B cell (primary cell): ENCODE measurements at regions of chr3 and their contacts with region 1.

Region 1: GRCh38 chr3:136861890-136862616 is at the start of gene NCK1:
- DNase-seq: peak; percentile 98
- ATAC-seq: peak; percentile 92
- H3K4me3 ChIP-seq: peak within 1 kb of the TSS; percentile 78 to 84 (median 83)
- H3K4me3 Mint-ChIP-seq: peak within 1 kb of the TSS; percentile 98
- H3K27ac ChIP-seq: peak within 1 kb of the TSS; percentile 85 to 90
- H3K27ac Mint-ChIP-seq: peak within 1 kb of the TSS; percentile 99
- H3K4me1 ChIP-seq: peaks cover 18 to 22% of the 10 kb centered on the region in 2 donors
- H3K4me1 Mint-ChIP-seq: peaks cover 41% of the 10 kb centered on the region
- H3K27me3 ChIP-seq: no peaks in the 10 kb centered on the region
- H3K27me3 Mint-ChIP-seq: no peaks in the 10 kb centered on the region
- CTCF ChIP-seq: peak; percentile 52
- total RNA-seq, gene NCK1: 32.4 and 39.2 TPM in 2 replicates

Region 2: GRCh38 chr3:135965506-135966270 is 896.4 kb before region 1 on chr3 and contains the start of gene PPP2R3A:
- CTCF ChIA-PET with region 1: no interaction called
- POLR2A ChIA-PET with region 1: no interaction called
- intact Hi-C with region 1: loop called (anchors 5 kb)
- DNase-seq: peak; percentile 73
- ATAC-seq: peak; percentile 88
- H3K4me3 ChIP-seq: peak within 1 kb of the TSS in 4 of 5 experiments; percentile 42 to 77 (median 60)
- H3K4me3 Mint-ChIP-seq: peak within 1 kb of the TSS; percentile 87
- H3K27ac ChIP-seq: no peak within 1 kb of the TSS
- H3K27ac Mint-ChIP-seq: no peak within 1 kb of the TSS
- H3K4me1 ChIP-seq: peaks cover 7 to 14% of the 10 kb centered on the region in 2 donors
- H3K4me1 Mint-ChIP-seq: peaks cover 11% of the 10 kb centered on the region
- H3K27me3 ChIP-seq: peaks cover 0 to 20% (median 18%) of the 10 kb centered on the region in 4 experiments
- H3K27me3 Mint-ChIP-seq: peaks cover 46% of the 10 kb centered on the region
- CTCF ChIP-seq: no peak
- total RNA-seq, gene PPP2R3A: 0.22 and 0.39 TPM in 2 replicates

Region 3: GRCh38 chr3:136196401-136197158 is 665.5 kb before region 1 on chr3:
- CTCF ChIA-PET with region 1: no interaction called
- POLR2A ChIA-PET with region 1: interaction called, 24 read pairs
- intact Hi-C with region 1: no loop called
- DNase-seq: peak; percentile 99
- ATAC-seq: peak; percentile 68
- H3K4me3 ChIP-seq: peak overlapping the region; percentile 65 to 95 (median 86)
- H3K4me3 Mint-ChIP-seq: peak overlapping the region; percentile 97
- H3K27ac ChIP-seq: peak overlapping the region; percentile 91 to 99
- H3K27ac Mint-ChIP-seq: peak overlapping the region; percentile 100
- H3K4me1 ChIP-seq: peaks cover 34 to 36% of the 10 kb centered on the region in 2 donors
- H3K4me1 Mint-ChIP-seq: peaks cover 36% of the 10 kb centered on the region
- H3K27me3 ChIP-seq: no peaks in the 10 kb centered on the region
- H3K27me3 Mint-ChIP-seq: no peaks in the 10 kb centered on the region
- CTCF ChIP-seq: no peak

Region 4: GRCh38 chr3:136390574-136390973 is 471.5 kb before region 1 on chr3:
- CTCF ChIA-PET with region 1: interaction called, 9 read pairs
- POLR2A ChIA-PET with region 1: interaction called, 6 read pairs
- intact Hi-C with region 1: loop called (anchors 1 kb)
- DNase-seq: no peak
- ATAC-seq: no peak
- H3K4me3 ChIP-seq: no peak overlapping the region
- H3K4me3 Mint-ChIP-seq: no peak overlapping the region
- H3K27ac ChIP-seq: no peak overlapping the region
- H3K27ac Mint-ChIP-seq: no peak overlapping the region
- H3K4me1 ChIP-seq: no peaks in the 10 kb centered on the region
- H3K4me1 Mint-ChIP-seq: peaks cover 5% of the 10 kb centered on the region
- H3K27me3 ChIP-seq: no peaks in the 10 kb centered on the region
- H3K27me3 Mint-ChIP-seq: no peaks in the 10 kb centered on the region
- CTCF ChIP-seq: no peak

Region 5: GRCh38 chr3:136547293-136547692 is 314.8 kb before region 1 on chr3:
- CTCF ChIA-PET with region 1: no interaction called
- POLR2A ChIA-PET with region 1: no interaction called
- intact Hi-C with region 1: no loop called
- DNase-seq: no peak
- ATAC-seq: no peak
- H3K4me3 ChIP-seq: no peak overlapping the region
- H3K4me3 Mint-ChIP-seq: no peak overlapping the region
- H3K27ac ChIP-seq: peak overlapping the region in 1 of 2 donors; percentile 7
- H3K27ac Mint-ChIP-seq: no peak overlapping the region
- H3K4me1 ChIP-seq: peaks cover 3 to 8% of the 10 kb centered on the region in 2 donors
- H3K4me1 Mint-ChIP-seq: peaks cover 17% of the 10 kb centered on the region
- H3K27me3 ChIP-seq: no peaks in the 10 kb centered on the region
- H3K27me3 Mint-ChIP-seq: no peaks in the 10 kb centered on the region
- CTCF ChIP-seq: no peak

Region 6: GRCh38 chr3:136559896-136560295 is 302.2 kb before region 1 on chr3:
- CTCF ChIA-PET with region 1: no interaction called
- POLR2A ChIA-PET with region 1: no interaction called
- intact Hi-C with region 1: no loop called
- DNase-seq: no peak
- ATAC-seq: no peak
- H3K4me3 ChIP-seq: no peak overlapping the region
- H3K4me3 Mint-ChIP-seq: no peak overlapping the region
- H3K27ac ChIP-seq: no peak overlapping the region
- H3K27ac Mint-ChIP-seq: no peak overlapping the region
- H3K4me1 ChIP-seq: no peaks in the 10 kb centered on the region
- H3K4me1 Mint-ChIP-seq: peaks cover 2% of the 10 kb centered on the region
- H3K27me3 ChIP-seq: no peaks in the 10 kb centered on the region
- H3K27me3 Mint-ChIP-seq: no peaks in the 10 kb centered on the region
- CTCF ChIP-seq: no peak

Region 7: DNA sequence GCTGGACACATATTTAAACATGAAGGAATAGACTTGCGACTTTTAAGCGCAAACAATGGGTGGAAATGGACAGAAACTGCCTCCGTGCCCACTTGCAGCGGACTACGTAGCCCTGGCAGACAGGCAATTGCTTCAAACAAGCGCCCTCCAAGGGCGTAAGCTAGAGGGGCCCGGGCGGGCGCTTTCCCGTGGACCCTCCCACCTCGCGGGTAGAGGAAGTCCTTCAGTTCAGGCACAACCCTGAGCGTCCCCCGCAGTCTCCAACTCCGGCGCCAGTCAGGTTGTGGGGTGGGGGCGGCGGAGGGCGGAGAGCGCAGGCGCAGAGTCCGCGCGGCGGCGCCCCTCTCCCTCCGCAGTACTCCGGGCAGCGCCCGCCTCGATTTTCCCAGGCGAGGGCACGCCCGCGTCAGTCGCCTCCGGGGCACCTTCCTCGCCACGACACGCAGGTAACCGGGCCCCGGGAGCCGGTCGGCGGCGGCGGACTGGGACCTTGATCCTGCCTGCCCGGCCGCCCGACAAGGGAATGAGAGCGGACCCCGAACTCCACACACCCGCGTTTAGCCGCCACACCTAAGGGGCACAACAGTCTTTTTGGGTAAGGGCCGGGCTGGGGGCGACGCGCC is 43.2 kb before region 1 on chr3 and contains the start of gene SLC35G2:
- CTCF ChIA-PET with region 1: no interaction called
- POLR2A ChIA-PET with region 1: interaction called, 3 read pairs
- intact Hi-C with region 1: loop called (anchors 1 kb)
- DNase-seq: peak; percentile 38
- ATAC-seq: peak; percentile 68
- H3K4me3 ChIP-seq: peak within 1 kb of the TSS; percentile 43 to 66 (median 58)
- H3K4me3 Mint-ChIP-seq: peak within 1 kb of the TSS; percentile 95
- H3K27ac ChIP-seq: no peak within 1 kb of the TSS
- H3K27ac Mint-ChIP-seq: peak within 1 kb of the TSS; percentile 89
- H3K4me1 ChIP-seq: peaks cover 21 to 22% of the 10 kb centered on the region in 2 donors
- H3K4me1 Mint-ChIP-seq: peaks cover 23% of the 10 kb centered on the region
- H3K27me3 ChIP-seq: peaks cover 0 to 40% (median 31%) of the 10 kb centered on the region in 4 experiments
- H3K27me3 Mint-ChIP-seq: peaks cover 30% of the 10 kb centered on the region
- CTCF ChIP-seq: no peak
- total RNA-seq, gene SLC35G2: 6.3 and 9.4 TPM in 2 replicates

Region 8: GRCh38 chr3:137013955-137014688 is 152.1 kb after region 1 on chr3:
- CTCF ChIA-PET with region 1: interaction called, 27 read pairs
- POLR2A ChIA-PET with region 1: no interaction called
- intact Hi-C with region 1: loop called (anchors 2 kb)
- DNase-seq: peak; percentile 85
- ATAC-seq: peak; percentile 90
- H3K4me3 ChIP-seq: peak overlapping the region in 4 of 5 experiments; percentile 7 to 55 (median 38)
- H3K4me3 Mint-ChIP-seq: peak overlapping the region; percentile 71
- H3K27ac ChIP-seq: no peak overlapping the region
- H3K27ac Mint-ChIP-seq: no peak overlapping the region
- H3K4me1 ChIP-seq: peaks cover 5 to 9% of the 10 kb centered on the region in 2 donors
- H3K4me1 Mint-ChIP-seq: peaks cover 7% of the 10 kb centered on the region
- H3K27me3 ChIP-seq: no peaks in the 10 kb centered on the region
- H3K27me3 Mint-ChIP-seq: no peaks in the 10 kb centered on the region
- CTCF ChIP-seq: peak; percentile 95